Sigmoid colon (tissue), 7 donors: ENCODE measurements at regions of chr1 and their contacts with region 1.

Region 1: DNA sequence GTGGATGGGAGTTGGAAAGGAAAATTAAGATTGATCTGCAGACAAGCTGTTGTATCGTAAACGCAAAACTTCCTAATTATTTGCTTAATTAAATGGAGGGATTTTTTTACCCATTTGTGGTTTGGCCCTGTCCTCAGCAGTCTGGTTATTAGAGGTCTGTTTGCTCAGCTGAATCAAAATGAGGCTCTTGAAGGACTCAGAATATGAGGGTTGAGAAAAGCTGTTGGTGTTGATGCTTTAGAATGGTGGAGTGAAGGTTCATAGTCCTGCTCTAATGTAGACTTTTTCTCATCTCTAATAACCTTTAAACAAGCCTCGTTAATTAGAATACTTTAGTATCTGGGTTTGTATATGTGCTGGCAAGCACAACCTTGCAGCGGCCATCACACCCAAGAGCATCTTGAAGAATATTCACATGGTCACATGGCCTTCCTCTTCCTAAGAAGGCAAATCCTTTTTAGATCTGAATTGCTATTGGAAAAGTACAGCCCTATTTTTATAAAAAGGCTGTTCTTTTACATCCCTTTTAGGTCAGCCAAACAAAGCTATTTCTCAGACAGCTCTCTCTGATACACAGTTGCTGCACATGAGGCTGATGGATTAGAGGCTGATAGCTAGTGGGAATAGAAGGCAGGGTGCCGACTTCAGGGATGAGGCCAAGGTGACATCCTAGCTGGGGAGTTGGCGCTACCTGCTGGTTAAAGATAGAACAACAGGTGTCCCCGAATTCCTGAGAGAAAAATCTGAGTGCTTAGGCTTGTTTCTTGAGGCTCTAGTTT is 53.8 kb downstream of the MACF1 start:
- DNase-seq: peak; percentile 93
- H3K4me3 ChIP-seq: no peak overlapping the region
- H3K27ac ChIP-seq: peak overlapping the region; percentile 63 to 82 (median 64)
- H3K4me1 ChIP-seq: peaks cover 0 to 55% (median 32%) of the 10 kb centered on the region in 4 donors
- H3K27me3 ChIP-seq: no peaks in the 10 kb centered on the region
- CTCF ChIP-seq: peak; percentile 84 to 90 (median 88)
- EP300 ChIP-seq: no peak
- POLR2A ChIP-seq: no peak

Region 2: GRCh38 chr1:39196244-39197215 is 61.8 kb before region 1 on chr1:
- intact Hi-C with region 1: loop called (anchors 1 kb)
- DNase-seq: no peak
- H3K4me3 ChIP-seq: no peak overlapping the region
- H3K27ac ChIP-seq: peak overlapping the region; percentile 83 to 95 (median 90)
- H3K4me1 ChIP-seq: peaks cover 0 to 74% (median 70%) of the 10 kb centered on the region in 4 donors
- H3K27me3 ChIP-seq: no peaks in the 10 kb centered on the region
- CTCF ChIP-seq: no peak
- EP300 ChIP-seq: no peak
- POLR2A ChIP-seq: no peak

Region 3: DNA sequence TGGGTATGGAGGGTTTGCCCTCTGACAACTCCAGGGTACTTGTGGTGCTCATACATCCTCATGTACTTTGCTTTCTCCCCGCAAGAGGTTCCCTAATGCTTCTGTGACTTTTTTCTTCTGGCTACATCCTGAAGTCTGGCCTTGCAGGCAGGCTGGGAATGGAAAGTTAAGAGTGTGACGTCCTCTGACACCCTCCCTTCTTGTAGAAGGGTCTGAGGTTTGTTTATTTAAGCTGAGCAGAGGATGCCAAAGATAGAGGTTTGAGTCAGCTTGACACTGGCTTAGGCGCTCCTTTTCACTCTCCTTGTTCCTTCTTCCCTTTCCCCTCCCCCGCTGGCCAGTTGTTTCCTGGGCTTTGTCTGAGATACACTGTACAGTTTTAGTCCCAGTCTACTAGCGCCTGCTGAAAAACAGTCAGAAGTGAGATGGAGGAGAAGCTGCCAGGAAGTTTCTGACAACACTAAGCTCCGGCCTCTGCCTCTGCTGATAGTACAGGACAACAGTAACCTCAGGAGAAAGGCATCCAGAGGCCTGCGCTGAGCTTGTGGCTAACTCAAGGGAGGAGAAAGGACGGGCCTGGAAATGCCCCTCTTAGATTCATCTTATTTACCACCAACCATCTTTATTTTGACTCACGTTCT is 53.8 kb before region 1 on chr1 and contains the start of gene MACF1:
- intact Hi-C with region 1: loop called (anchors 2 kb)
- DNase-seq: peak; percentile 92
- H3K4me3 ChIP-seq: peak within 1 kb of the TSS; percentile 32 to 53 (median 47)
- H3K27ac ChIP-seq: peak within 1 kb of the TSS; percentile 89 to 95 (median 91)
- H3K4me1 ChIP-seq: peaks cover 0 to 63% (median 59%) of the 10 kb centered on the region in 4 donors
- H3K27me3 ChIP-seq: no peaks in the 10 kb centered on the region
- CTCF ChIP-seq: peak; percentile 56 to 89 (median 78)
- EP300 ChIP-seq: peak in 1 of 4 donors; percentile 47
- POLR2A ChIP-seq: peak in 1 of 2 donors; percentile 77
- total RNA-seq, gene MACF1: 292 to 657 (median 428) TPM